ENCODE measurements at regions of chr4 and their contacts with region 1.

Region 1: DNA sequence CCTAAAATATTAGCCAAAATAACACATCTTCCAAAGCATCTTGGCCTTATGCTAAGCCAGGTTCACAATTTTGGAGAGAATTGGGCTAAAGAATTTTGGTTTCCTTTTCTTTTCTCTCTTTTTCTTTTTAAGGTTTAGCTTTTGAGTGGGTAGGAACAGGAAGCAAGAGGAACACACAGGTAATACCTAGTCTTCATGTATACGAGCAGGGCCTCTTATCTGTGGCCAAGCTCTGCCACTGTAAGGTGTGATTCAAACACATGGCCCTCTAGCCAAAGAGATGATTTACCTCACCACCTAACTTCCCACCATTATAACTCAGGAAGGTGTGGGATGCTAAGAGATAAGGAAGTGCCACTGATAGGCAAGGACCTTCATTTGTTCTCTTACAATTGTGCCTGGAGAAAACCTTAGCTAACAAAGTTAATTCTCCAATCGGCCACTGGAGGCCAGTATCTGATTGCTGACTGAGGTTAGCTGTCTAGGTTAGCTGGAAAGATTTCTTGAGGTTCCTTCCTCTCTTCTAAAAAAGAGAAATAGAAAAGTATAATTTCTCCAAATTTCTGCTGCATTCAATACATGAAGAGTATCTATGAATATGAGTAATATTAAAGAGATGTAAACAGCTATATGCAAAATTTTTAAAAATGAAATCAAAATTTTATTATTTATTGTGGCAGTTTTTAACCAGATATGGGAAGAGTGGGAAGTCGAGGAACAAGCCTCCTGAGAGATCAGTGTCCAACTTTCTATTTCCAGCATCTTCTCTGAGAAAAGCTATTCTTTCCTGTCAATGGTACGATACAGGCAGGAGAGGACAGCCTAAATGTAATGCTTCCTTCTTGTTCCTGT is 30.1 kb upstream of the BBS7 start:
- DNase-seq: peak in 8 of 9 donors; percentile 33 to 59 (median 54)
- ATAC-seq: peak; percentile 87
- H3K4me3 ChIP-seq: no peak overlapping the region
- H3K4me3 Mint-ChIP-seq: no peak overlapping the region
- H3K27ac ChIP-seq: no peak overlapping the region
- H3K27ac Mint-ChIP-seq: peak overlapping the region in 6 of 9 donors; percentile 1 to 84 (median 57)
- H3K4me1 ChIP-seq: peaks cover 0 to 3% of the 10 kb centered on the region in 2 donors
- H3K4me1 Mint-ChIP-seq: peaks cover 0 to 16% (median 9%) of the 10 kb centered on the region in 7 donors
- H3K27me3 ChIP-seq: no peaks in the 10 kb centered on the region
- H3K27me3 Mint-ChIP-seq: peaks cover 11 to 24% (median 13%) of the 10 kb centered on the region in 5 donors

Region 2: GRCh38 chr4:121950212-121950679 is 49.9 kb after region 1 on chr4:
- CTCF ChIA-PET with region 1: interaction called, 3 read pairs
- POLR2A ChIA-PET with region 1: no interaction called
- intact Hi-C with region 1: loop called in 1 of 2 experiments (anchors 1 kb)
- DNase-seq: peak; percentile 53 to 88 (median 68)
- ATAC-seq: peak; percentile 87
- H3K4me3 ChIP-seq: peak overlapping the region; percentile 50
- H3K4me3 Mint-ChIP-seq: peak overlapping the region; percentile 84 to 95 (median 88)
- H3K27ac ChIP-seq: no peak overlapping the region
- H3K27ac Mint-ChIP-seq: peak overlapping the region in 4 of 9 donors; percentile 10 to 45 (median 20)
- H3K4me1 ChIP-seq: no peaks in the 10 kb centered on the region
- H3K4me1 Mint-ChIP-seq: peaks cover 0 to 26% (median 17%) of the 10 kb centered on the region in 7 donors
- H3K27me3 ChIP-seq: peaks cover 0 to 11% of the 10 kb centered on the region in 2 donors
- H3K27me3 Mint-ChIP-seq: peaks cover 32 to 65% (median 47%) of the 10 kb centered on the region in 5 donors

Region 3: DNA sequence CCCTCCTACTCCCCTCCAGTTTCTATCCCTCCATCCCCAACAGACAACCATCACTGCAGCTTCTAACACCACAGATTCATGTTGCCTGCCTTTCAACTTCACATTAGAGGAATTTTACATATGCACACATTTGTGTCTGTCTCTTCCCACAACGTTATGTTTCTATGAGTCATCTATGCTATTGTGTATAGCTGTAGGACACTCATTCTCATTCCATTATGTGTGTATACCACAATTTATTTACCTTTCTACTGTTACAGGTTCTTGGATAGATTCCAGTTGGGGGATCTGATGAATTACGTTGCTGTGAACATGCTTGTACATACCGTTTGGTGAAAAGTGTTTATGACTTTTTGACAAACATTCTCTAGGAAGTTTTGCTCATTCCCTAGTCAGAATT is 110.3 kb after region 1 on chr4:
- CTCF ChIA-PET with region 1: no interaction called
- POLR2A ChIA-PET with region 1: no interaction called
- intact Hi-C with region 1: no loop called
- DNase-seq: no peak
- ATAC-seq: no peak
- H3K4me3 ChIP-seq: no peak overlapping the region
- H3K4me3 Mint-ChIP-seq: no peak overlapping the region
- H3K27ac ChIP-seq: no peak overlapping the region
- H3K27ac Mint-ChIP-seq: no peak overlapping the region
- H3K4me1 ChIP-seq: no peaks in the 10 kb centered on the region
- H3K4me1 Mint-ChIP-seq: peaks cover 0 to 8% (median 0%) of the 10 kb centered on the region in 7 donors
- H3K27me3 ChIP-seq: no peaks in the 10 kb centered on the region
- H3K27me3 Mint-ChIP-seq: peaks cover 4 to 24% (median 12%) of the 10 kb centered on the region in 5 donors

Region 4: DNA sequence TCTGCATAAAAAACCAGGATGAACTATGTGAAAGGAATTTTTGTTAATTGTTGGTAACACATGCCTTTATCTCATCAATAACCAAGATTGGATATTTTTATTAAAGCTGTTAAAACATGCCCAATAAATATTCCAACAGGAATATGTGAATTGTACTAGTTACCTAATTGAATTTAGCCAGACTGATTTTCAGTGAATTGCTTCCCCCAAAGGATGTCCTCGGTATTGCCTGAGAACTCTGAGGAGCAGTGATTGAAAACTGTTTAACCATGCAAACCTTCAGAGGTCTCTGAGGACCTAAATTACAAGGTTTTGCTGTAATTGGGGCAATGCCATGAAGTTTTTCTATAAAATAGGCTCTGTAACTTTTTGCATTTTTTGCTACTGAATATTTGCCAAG is 318.4 kb after region 1 on chr4:
- CTCF ChIA-PET with region 1: interaction called, 3 read pairs
- POLR2A ChIA-PET with region 1: no interaction called
- intact Hi-C with region 1: loop called in 1 of 2 experiments (anchors 1 kb)
- DNase-seq: peak in 1 of 9 donors; percentile 4
- ATAC-seq: no peak
- H3K4me3 ChIP-seq: no peak overlapping the region
- H3K4me3 Mint-ChIP-seq: no peak overlapping the region
- H3K27ac ChIP-seq: no peak overlapping the region
- H3K27ac Mint-ChIP-seq: no peak overlapping the region
- H3K4me1 ChIP-seq: no peaks in the 10 kb centered on the region
- H3K4me1 Mint-ChIP-seq: peaks cover 0 to 46% (median 23%) of the 10 kb centered on the region in 7 donors
- H3K27me3 ChIP-seq: no peaks in the 10 kb centered on the region
- H3K27me3 Mint-ChIP-seq: no peaks in the 10 kb centered on the region

Region 5: DNA sequence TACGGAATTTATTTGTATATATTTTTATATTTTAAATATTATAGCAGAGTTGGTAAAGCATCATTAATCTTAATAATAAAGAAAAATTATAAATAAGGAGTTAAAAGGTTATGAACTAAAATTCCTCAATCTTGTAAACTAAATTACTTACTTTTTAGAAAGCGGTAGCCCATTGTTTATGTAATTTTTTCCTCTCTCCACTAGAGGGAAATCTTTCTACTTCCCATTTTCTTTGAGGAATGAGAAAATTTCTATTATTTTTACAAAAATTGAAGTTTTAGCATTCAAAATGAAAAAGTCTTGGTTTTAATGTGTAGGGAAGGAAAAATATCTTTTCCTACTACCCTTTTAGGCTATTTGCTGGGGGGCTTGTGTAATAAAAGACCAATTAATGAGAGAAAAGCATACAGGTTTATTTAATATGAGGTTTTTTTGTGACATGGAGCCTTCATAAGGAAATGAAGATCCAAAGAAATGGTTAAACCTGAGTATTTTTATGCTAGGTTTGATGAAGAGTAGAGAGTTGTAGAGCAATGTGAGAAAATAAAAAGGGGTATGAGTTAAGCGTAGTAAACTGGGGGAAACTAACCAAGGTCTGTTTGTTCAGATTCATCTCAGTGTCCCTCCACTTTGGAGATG is 409.7 kb after region 1 on chr4:
- CTCF ChIA-PET with region 1: no interaction called
- POLR2A ChIA-PET with region 1: no interaction called
- intact Hi-C with region 1: loop called (anchors 5 to 10 kb)
- DNase-seq: peak in 3 of 9 donors; percentile 2 to 8 (median 7)
- ATAC-seq: no peak
- H3K4me3 ChIP-seq: no peak overlapping the region
- H3K4me3 Mint-ChIP-seq: no peak overlapping the region
- H3K27ac ChIP-seq: no peak overlapping the region
- H3K27ac Mint-ChIP-seq: no peak overlapping the region
- H3K4me1 ChIP-seq: no peaks in the 10 kb centered on the region
- H3K4me1 Mint-ChIP-seq: peaks cover 0 to 4% (median 0%) of the 10 kb centered on the region in 7 donors
- H3K27me3 ChIP-seq: no peaks in the 10 kb centered on the region
- H3K27me3 Mint-ChIP-seq: no peaks in the 10 kb centered on the region

Region 6: GRCh38 chr4:122716825-122717448 is 816.6 kb after region 1 on chr4:
- CTCF ChIA-PET with region 1: interaction called, 8 read pairs
- POLR2A ChIA-PET with region 1: interaction called, 3 read pairs
- intact Hi-C with region 1: loop called in 1 of 2 experiments (anchors 2 kb)
- DNase-seq: peak; percentile 20 to 70 (median 63)
- ATAC-seq: peak; percentile 96
- H3K4me3 ChIP-seq: no peak overlapping the region
- H3K4me3 Mint-ChIP-seq: no peak overlapping the region
- H3K27ac ChIP-seq: no peak overlapping the region
- H3K27ac Mint-ChIP-seq: peak overlapping the region in 1 of 9 donors; percentile 46
- H3K4me1 ChIP-seq: peaks cover 0 to 5% of the 10 kb centered on the region in 2 donors
- H3K4me1 Mint-ChIP-seq: peaks cover 0 to 37% (median 12%) of the 10 kb centered on the region in 7 donors
- H3K27me3 ChIP-seq: no peaks in the 10 kb centered on the region
- H3K27me3 Mint-ChIP-seq: peaks cover 0 to 2% (median 0%) of the 10 kb centered on the region in 5 donors